ENCODE measurements at regions of chr4 and their contacts with region 1.

Region 1: DNA sequence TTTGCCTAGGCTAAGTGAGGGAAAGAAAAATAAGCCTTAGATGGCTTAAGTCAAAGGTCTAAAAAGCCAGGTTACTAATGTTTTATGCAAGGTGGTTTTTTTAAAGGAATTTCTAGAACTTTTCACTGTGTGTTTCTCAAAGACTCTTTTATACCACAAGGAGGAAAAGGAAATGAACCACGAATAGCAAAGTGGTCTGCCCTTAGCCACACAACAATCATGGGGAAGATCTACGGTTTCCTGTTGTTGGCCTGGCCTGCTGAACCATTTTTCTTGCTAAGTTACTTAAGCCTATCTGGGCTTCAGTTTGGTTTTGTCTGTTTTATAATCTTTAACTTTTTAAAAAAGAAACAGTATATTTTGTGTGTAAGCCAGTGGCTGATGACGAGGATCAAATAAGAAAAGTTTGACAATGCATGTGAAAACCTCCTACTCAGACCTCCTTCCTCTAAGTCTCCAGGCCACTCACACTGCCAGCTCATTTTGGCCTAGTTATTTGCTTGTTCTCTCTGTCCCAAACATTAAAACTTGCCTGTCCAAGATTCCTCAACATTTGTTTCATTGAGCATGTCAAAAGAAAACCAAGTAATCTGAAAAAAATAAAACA is 56.7 kb upstream of the COL25A1 start:
- DNase-seq: peak in 7 of 9 donors; percentile 18 to 52 (median 40)
- ATAC-seq: peak; percentile 71
- H3K4me3 ChIP-seq: no peak overlapping the region
- H3K4me3 Mint-ChIP-seq: peak overlapping the region; percentile 52 to 83 (median 66)
- H3K27ac ChIP-seq: no peak overlapping the region
- H3K27ac Mint-ChIP-seq: peak overlapping the region in 2 of 9 donors; percentile 23 to 84
- H3K4me1 ChIP-seq: peaks cover 18 to 20% of the 10 kb centered on the region in 2 donors
- H3K4me1 Mint-ChIP-seq: peaks cover 18 to 51% (median 34%) of the 10 kb centered on the region in 7 donors
- H3K27me3 ChIP-seq: peaks cover 0 to 5% of the 10 kb centered on the region in 2 donors
- H3K27me3 Mint-ChIP-seq: peaks cover 17 to 53% (median 32%) of the 10 kb centered on the region in 5 donors

Region 2: GRCh38 chr4:109214622-109215301 is 144.4 kb before region 1 on chr4:
- CTCF ChIA-PET with region 1: no interaction called
- POLR2A ChIA-PET with region 1: no interaction called
- intact Hi-C with region 1: no loop called
- DNase-seq: no peak
- ATAC-seq: no peak
- H3K4me3 ChIP-seq: no peak overlapping the region
- H3K4me3 Mint-ChIP-seq: no peak overlapping the region
- H3K27ac ChIP-seq: no peak overlapping the region
- H3K27ac Mint-ChIP-seq: no peak overlapping the region
- H3K4me1 ChIP-seq: no peaks in the 10 kb centered on the region
- H3K4me1 Mint-ChIP-seq: no peaks in the 10 kb centered on the region
- H3K27me3 ChIP-seq: no peaks in the 10 kb centered on the region
- H3K27me3 Mint-ChIP-seq: peaks cover 10 to 28% (median 11%) of the 10 kb centered on the region in 5 donors

Region 3: GRCh38 chr4:109302361-109303139 is 56.6 kb before region 1 on chr4 and contains the start of gene COL25A1:
- CTCF ChIA-PET with region 1: no interaction called
- POLR2A ChIA-PET with region 1: no interaction called
- intact Hi-C with region 1: loop called in 1 of 2 experiments (anchors 5 kb)
- DNase-seq: peak; percentile 7 to 60 (median 41)
- ATAC-seq: peak; percentile 77
- H3K4me3 ChIP-seq: peak within 1 kb of the TSS; percentile 73
- H3K4me3 Mint-ChIP-seq: peak within 1 kb of the TSS; percentile 76 to 92 (median 84)
- H3K27ac ChIP-seq: no peak within 1 kb of the TSS
- H3K27ac Mint-ChIP-seq: peak within 1 kb of the TSS in 5 of 9 donors; percentile 21 to 65 (median 36)
- H3K4me1 ChIP-seq: peaks cover 8 to 9% of the 10 kb centered on the region in 2 donors
- H3K4me1 Mint-ChIP-seq: peaks cover 11 to 25% (median 19%) of the 10 kb centered on the region in 7 donors
- H3K27me3 ChIP-seq: peaks cover 10 to 16% of the 10 kb centered on the region in 2 donors
- H3K27me3 Mint-ChIP-seq: peaks cover 47 to 80% (median 64%) of the 10 kb centered on the region in 5 donors
- total RNA-seq, gene COL25A1: 0.22 to 0.59 (median 0.49) TPM in 4 of 5 experiments, not detected in the other

Measured in naive thymus-derived CD4-positive, alpha-beta T cell (primary cell).